ENCODE measurements at regions of chr17 and their contacts with region 1.

Region 1: DNA sequence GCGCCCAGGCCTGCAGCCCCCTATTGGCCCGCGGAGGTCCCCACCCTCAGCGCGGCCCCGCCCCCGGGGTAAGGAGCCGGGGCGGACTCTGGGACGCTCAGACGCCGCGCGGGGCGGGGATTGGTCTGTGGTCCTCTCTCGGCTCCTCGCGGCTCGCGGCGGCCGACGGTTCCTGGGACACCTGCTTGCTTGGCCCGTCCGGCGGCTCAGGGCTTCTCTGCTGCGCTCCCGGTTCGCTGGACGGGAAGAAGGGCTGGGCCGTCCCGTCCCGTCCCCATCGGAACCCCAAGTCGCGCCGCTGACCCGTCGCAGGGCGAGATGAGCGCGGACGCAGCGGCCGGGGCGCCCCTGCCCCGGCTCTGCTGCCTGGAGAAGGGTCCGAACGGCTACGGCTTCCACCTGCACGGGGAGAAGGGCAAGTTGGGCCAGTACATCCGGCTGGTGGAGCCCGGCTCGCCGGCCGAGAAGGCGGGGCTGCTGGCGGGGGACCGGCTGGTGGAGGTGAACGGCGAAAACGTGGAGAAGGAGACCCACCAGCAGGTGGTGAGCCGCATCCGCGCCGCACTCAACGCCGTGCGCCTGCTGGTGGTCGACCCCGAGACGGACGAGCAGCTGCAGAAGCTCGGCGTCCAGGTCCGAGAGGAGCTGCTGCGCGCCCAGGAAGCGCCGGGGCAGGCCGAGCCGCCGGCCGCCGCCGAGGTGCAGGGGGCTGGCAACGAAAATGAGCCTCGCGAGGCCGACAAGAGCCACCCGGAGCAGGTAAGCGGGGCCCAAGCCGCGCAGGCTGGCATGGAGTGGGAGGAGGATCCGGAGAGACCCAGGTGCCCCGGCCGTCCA is at the start of gene NHERF1:
- DNase-seq: no peak
- ATAC-seq: peak; percentile 95
- H3K4me3 ChIP-seq: peak within 1 kb of the TSS; percentile 76 to 95
- H3K27ac ChIP-seq: peak within 1 kb of the TSS; percentile 87
- H3K4me1 ChIP-seq: peaks cover 38% of the 10 kb centered on the region
- H3K27me3 ChIP-seq: no peaks in the 10 kb centered on the region
- CTCF ChIP-seq: no peak
- total RNA-seq, gene NHERF1: 90.8 TPM

Region 2: GRCh38 chr17:74690409-74690825 is 58.3 kb before region 1 on chr17:
- CTCF ChIA-PET with region 1: no interaction called
- POLR2A ChIA-PET with region 1: no interaction called
- in situ Hi-C with region 1: no loop called
- intact Hi-C with region 1: no loop called
- DNase-seq: no peak
- ATAC-seq: no peak
- H3K4me3 ChIP-seq: no peak overlapping the region
- H3K27ac ChIP-seq: no peak overlapping the region
- H3K4me1 ChIP-seq: no peaks in the 10 kb centered on the region
- H3K27me3 ChIP-seq: peaks cover 8% of the 10 kb centered on the region
- CTCF ChIP-seq: no peak

Region 3: GRCh38 chr17:74770498-74771318 is 22.0 kb after region 1 on chr17:
- CTCF ChIA-PET with region 1: interaction called, 16 read pairs
- POLR2A ChIA-PET with region 1: interaction called, 4 read pairs
- in situ Hi-C with region 1: no loop called
- intact Hi-C with region 1: loop called (anchors 1 kb)
- DNase-seq: no peak
- ATAC-seq: peak; percentile 80
- H3K4me3 ChIP-seq: no peak overlapping the region
- H3K27ac ChIP-seq: no peak overlapping the region
- H3K4me1 ChIP-seq: peaks cover 43% of the 10 kb centered on the region
- H3K27me3 ChIP-seq: no peaks in the 10 kb centered on the region
- CTCF ChIP-seq: peak; percentile 96

Region 4: GRCh38 chr17:74864866-74865395 is 116.2 kb after region 1 on chr17:
- CTCF ChIA-PET with region 1: interaction called, 3 read pairs
- POLR2A ChIA-PET with region 1: no interaction called
- in situ Hi-C with region 1: no loop called
- intact Hi-C with region 1: loop called (anchors 5 kb)
- DNase-seq: peak; percentile 47
- ATAC-seq: peak; percentile 64
- H3K4me3 ChIP-seq: no peak overlapping the region
- H3K27ac ChIP-seq: no peak overlapping the region
- H3K4me1 ChIP-seq: peaks cover 18% of the 10 kb centered on the region
- H3K27me3 ChIP-seq: peaks cover 10% of the 10 kb centered on the region; the same call in 1 of the 2 replicates
- CTCF ChIP-seq: peak; percentile 98

Measured in Panc1 (cell line).